ENCODE measurements at regions of chr1 and their contacts with region 1.

Region 1: GRCh38 chr1:172429331-172430127 is 9.0 kb downstream of the C1orf105 start:
- DNase-seq: peak; percentile 65 to 82
- ATAC-seq: peak; percentile 74 to 89
- H3K4me3 ChIP-seq: no peak overlapping the region
- H3K27ac ChIP-seq: no peak overlapping the region
- H3K4me1 ChIP-seq: no peaks in the 10 kb centered on the region
- CTCF ChIP-seq: peak; percentile 99
- EP300 ChIP-seq: no peak
- POLR2A ChIP-seq: no peak
- RAD21 ChIP-seq: peak; percentile 95 to 96

Region 2: DNA sequence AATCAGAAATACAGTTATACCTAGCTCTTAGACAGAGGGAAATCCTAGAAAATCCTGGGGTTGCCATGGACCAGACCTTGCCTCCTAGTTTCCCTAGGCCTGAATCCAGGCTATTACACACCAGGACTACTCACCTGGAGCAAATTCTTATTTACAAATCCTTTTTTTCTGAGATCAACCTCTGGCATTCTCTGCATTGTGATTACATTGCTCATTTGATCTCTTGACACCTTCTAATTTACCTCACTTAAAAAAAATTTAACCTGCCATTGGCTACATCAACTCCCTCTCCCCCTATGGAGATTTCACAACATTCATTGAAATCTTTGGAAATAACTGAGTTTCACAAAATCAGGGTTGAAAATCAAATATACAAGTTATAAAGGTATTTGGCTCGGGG is 12.0 kb before region 1 on chr1:
- CTCF ChIA-PET with region 1: interaction called, 10 read pairs
- POLR2A ChIA-PET with region 1: no interaction called
- DNase-seq: no peak
- ATAC-seq: no peak
- H3K4me3 ChIP-seq: no peak overlapping the region
- H3K27ac ChIP-seq: no peak overlapping the region
- H3K4me1 ChIP-seq: peaks cover 12% of the 10 kb centered on the region; the same call in 2 of the 3 replicates
- CTCF ChIP-seq: no peak
- EP300 ChIP-seq: no peak
- POLR2A ChIP-seq: no peak
- RAD21 ChIP-seq: no peak

Region 3: DNA sequence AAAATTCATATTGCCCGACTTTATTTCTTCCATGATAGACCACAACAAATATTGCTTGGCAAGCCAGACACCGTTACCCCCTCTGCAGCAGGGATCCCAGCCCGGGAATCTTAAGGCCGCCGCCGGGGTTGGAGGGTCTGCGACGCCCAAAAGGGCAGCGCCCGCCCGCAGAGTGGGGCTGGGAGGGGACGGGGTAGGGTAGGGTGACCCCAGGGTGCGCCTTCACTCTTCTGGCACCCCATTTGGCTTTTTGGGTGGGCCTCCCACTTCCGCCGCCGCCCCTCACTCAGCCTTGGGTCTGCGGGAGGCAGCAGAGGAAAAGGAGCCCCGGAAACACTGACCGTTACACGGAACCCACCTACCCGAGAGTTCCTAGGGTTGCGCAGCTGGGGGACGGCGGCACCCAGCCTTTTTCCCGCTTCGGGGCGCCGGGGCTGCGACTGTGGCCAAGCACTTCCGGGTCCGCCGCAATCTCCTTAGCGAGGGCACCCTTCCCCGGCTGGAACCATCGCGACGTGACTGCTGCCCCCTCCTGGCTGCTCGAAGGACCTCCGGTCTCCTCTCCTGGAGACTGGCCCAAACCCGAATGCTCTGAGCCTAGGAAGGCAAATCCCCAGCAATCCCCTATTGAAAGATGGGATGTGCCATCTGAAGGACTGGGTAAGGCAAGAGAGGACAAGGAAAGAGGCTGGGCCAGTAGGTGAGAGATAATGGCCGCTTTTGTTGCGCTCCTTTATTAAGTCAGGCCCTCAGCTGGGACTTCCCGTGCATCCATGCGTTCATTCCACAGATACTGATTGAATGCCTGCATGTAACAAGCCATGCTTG is 14.3 kb after region 1 on chr1 and contains the start of gene PIGC:
- CTCF ChIA-PET with region 1: interaction called, 13 read pairs
- POLR2A ChIA-PET with region 1: no interaction called
- DNase-seq: peak; percentile 90
- ATAC-seq: peak; percentile 97 to 99
- H3K4me3 ChIP-seq: peak within 1 kb of the TSS; percentile 92
- H3K27ac ChIP-seq: peak within 1 kb of the TSS; percentile 94 to 98
- H3K4me1 ChIP-seq: peaks cover 25% of the 10 kb centered on the region
- CTCF ChIP-seq: peak; percentile 79
- EP300 ChIP-seq: no peak
- POLR2A ChIP-seq: peak; percentile 59
- RAD21 ChIP-seq: peak; percentile 69 to 70
- polyA plus RNA-seq, gene PIGC: 50.0 and 51.4 TPM in 2 replicates

Measured in A549 (cell line).